ENCODE measurements at regions of chr19 and their contacts with region 1.

Region 1: GRCh38 chr19:38634757-38635482 is 12.5 kb upstream of the ACTN4 start:
- DNase-seq: peak; percentile 73
- ATAC-seq: peak; percentile 51
- H3K4me3 Mint-ChIP-seq: no peak overlapping the region
- H3K27ac Mint-ChIP-seq: peak overlapping the region; percentile 79
- H3K4me1 Mint-ChIP-seq: peaks cover 29% of the 10 kb centered on the region
- H3K27me3 Mint-ChIP-seq: no peaks in the 10 kb centered on the region
- CTCF ChIP-seq: peak; percentile 76

Region 2: DNA sequence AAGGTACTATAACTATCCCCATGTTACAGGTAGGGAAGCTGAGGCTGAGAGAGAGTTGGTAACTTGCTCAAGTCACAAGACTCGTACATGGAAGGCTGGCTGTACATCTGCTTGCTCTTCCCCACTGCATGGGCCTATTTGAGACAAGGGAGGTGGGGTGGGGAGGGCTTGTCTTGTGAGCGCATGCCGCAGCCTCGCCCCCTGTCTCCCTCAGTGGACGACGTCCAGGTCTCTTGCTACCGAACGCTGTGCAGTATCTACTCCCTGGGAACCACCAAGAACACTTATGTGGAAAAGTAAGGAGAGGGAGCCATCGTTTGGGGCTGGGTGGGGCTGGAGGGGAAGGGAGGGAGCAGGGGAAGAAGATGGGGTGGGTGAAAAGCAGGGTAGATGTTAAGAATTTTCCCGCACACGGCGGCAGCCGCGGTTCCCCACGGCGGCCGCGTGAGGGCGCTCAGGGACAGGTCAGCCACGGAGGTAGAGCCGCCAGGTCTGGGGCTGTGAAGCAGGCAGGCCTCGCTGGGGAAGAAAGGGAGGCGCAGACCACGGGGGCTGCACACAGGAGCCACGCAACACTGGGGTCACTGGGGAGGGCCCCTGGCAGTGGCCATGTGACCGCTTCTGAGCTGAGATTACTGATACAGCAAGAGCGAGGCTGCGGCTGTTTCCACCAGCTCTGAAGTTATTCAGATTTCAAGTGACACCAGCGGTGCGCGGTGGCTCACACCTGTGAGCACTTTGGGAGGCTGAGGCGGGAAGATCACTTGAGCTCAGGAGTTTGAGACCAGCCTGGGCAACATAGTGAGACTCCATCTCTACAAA is 119.9 kb before region 1 on chr19:
- CTCF ChIA-PET with region 1: interaction called, 8 read pairs
- POLR2A ChIA-PET with region 1: interaction called, 3 read pairs
- intact Hi-C with region 1: loop called (anchors 1 kb)
- DNase-seq: peak; percentile 70
- ATAC-seq: peak; percentile 97
- H3K4me3 Mint-ChIP-seq: no peak overlapping the region
- H3K27ac Mint-ChIP-seq: no peak overlapping the region
- H3K4me1 Mint-ChIP-seq: peaks cover 5% of the 10 kb centered on the region
- H3K27me3 Mint-ChIP-seq: peaks cover 12% of the 10 kb centered on the region
- CTCF ChIP-seq: no peak

Region 3: DNA sequence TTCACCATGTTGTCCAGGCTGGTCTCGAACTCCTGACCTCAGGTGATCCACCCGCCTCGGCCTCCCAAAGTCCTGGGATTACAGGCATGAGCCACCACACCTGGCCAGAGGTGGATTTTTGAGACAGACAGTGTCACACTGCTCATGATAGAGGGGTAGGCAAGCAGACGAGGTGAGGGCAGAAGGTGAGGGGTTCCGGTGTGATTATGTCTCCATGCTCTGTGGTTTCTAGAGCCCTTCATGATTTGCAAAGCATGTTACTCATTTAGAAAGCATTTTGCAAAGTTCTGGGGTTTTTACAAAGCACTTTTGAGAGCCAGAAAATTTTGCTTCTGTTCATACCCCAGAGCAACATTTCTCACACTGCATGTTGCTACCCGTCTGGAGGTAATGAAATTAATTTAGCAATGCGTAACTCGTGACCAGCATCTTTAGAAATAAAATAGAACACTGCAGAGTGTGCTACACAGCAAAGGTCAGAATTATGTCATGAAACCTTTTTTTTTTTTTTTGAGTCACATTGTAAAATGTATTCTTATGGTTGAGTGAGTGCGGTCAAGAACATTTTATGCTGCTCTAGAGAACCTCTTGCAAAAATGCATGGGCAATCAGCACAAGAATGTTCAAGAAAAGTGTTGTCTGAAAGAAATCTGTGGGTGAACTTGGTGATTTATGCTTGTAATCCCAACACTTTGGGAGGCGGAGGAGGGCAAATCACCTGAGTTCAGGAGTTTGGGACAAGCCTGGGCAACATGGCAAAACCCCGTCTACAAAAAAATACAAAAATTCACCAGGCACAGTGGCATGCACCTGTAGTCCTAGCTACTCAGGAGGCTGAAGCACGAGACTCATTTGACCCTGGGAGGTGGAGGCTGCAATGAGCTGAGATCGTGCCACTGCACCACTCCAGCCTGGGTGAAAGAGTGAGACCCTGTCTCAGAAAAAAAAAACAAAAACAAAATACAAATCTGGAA is 75.2 kb before region 1 on chr19:
- CTCF ChIA-PET with region 1: interaction called, 12 read pairs
- POLR2A ChIA-PET with region 1: interaction called, 4 read pairs
- intact Hi-C with region 1: loop called (anchors 1 kb)
- DNase-seq: no peak
- ATAC-seq: peak; percentile 82
- H3K4me3 Mint-ChIP-seq: peak overlapping the region; percentile 75
- H3K27ac Mint-ChIP-seq: peak overlapping the region; percentile 90
- H3K4me1 Mint-ChIP-seq: peaks cover 57% of the 10 kb centered on the region
- H3K27me3 Mint-ChIP-seq: peaks cover 6% of the 10 kb centered on the region
- CTCF ChIP-seq: no peak

Region 4: DNA sequence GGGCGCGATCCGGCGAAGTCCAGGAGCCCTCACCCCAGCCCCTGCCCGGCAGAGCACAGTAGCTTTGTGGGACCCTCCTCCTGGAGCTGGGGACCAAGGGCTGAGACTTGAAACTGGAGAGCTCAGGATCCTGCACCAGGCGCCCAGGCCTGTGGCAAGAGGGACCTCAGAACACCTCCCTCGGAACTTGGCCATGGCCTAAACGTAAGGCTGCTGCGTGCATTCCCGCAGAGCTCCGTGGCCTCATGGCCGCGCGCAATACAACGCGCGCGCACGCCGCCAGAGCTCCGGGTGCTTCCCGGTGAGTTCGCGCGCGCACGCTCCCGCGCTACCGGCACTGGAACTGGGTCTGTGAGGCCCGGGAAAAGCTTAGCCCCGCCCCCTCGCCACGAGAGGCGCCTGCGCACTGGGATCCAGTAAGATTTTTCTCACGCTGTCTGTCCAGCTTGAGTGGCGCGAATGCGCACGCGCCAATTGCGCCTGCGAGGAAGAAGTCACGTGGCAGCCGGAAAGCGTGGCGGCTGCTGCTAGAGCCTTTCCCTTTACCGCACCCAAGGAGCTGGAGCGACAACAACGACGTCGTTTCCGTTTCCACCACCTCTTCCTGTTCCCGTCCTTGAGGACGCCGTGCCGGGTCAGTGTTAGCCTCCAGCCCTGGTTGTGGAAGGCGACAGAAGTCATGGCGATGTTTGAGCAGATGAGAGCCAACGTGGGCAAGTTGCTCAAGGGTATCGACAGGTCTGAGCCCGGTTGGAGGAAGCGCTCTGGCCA is 16.1 kb before region 1 on chr19 and contains the start of gene EIF3K:
- CTCF ChIA-PET with region 1: interaction called, 49 read pairs
- POLR2A ChIA-PET with region 1: interaction called, 16 read pairs
- intact Hi-C with region 1: loop called (anchors 1 kb)
- DNase-seq: peak; percentile 97
- ATAC-seq: peak; percentile 28
- H3K4me3 Mint-ChIP-seq: peak within 1 kb of the TSS; percentile 100
- H3K27ac Mint-ChIP-seq: peak within 1 kb of the TSS; percentile 97
- H3K4me1 Mint-ChIP-seq: peaks cover 53% of the 10 kb centered on the region
- H3K27me3 Mint-ChIP-seq: no peaks in the 10 kb centered on the region
- CTCF ChIP-seq: no peak
- total RNA-seq, gene EIF3K: 344 and 385 TPM in 2 replicates

Region 5: DNA sequence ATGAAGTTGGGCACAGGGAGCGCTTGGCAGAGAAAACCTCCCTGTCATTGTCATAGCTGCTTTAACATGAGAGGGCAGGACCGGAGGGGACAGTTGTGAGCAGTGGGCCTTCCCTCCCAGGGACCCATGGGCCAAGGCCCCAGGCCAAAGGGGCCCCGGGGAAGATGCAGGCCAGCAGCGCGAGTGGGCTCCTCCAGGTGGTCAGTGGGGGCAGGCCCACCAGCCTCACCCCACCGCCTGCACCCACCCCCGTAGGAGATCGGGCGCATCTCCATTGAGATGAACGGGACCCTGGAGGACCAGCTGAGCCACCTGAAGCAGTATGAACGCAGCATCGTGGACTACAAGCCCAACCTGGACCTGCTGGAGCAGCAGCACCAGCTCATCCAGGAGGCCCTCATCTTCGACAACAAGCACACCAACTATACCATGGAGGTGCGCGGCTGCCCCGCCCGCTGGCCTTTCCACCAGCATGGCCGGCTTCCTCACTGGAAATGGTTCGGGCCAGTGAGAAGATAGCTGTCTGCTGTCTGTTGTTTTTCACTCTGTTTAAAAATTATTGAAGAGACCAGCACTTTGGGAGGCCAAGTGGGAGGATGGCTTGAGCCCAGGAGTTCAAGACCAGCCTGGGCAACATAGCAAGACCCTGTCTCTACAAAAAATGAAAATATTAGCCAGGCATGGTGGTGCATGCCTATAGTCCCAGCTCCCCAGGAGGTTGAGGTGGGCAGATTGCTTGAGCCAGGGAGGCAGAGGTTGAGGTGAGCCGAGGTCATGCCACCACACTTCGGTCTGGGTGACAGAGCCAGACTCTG is 90.8 kb after region 1 on chr19:
- CTCF ChIA-PET with region 1: no interaction called
- POLR2A ChIA-PET with region 1: no interaction called
- intact Hi-C with region 1: no loop called
- DNase-seq: no peak
- ATAC-seq: no peak
- H3K4me3 Mint-ChIP-seq: no peak overlapping the region
- H3K27ac Mint-ChIP-seq: no peak overlapping the region
- H3K4me1 Mint-ChIP-seq: peaks cover 5% of the 10 kb centered on the region
- H3K27me3 Mint-ChIP-seq: no peaks in the 10 kb centered on the region
- CTCF ChIP-seq: no peak

Region 6: DNA sequence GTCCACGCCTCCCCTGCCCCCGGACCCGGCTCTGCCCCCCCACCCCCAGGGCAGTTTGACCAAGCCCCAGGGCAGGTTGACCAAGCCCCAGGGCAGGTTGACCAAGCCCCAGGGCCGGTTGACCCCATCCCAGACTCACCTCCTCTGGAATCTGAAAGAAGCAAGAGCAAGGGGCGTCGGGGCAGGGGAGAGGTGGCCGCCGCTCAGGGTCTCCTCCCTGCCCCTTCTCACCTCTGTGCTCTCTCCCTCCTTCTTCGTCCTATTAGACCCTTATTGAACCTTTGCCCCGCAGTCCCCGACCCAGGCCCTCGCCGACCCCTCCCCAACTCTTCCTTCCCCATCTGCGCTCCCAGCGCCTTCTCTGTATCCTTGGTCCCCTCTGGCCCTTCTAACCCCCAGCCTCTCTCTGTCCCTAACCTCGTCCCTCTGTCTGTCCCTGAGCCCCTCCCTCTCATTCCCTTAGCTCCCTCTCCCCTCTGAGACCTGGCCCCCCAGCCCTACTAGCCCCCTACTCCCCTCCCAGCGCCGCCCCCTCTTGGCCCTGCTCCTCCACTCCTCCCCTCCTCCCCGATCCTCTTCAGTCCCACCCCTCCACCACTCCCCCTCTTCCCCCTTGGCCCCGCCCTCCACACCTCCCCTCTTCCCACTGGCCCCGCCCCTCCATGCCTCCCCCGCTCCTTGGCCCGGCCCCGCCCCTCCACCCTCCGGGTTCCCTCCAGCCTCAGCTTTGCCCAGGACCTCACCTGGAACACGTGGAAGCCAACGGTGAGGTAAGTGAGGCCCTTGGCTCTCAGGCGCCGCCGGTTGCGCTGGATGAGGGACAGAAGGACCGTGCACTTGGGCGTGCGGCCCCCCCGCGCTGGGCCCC is 101.7 kb after region 1 on chr19:
- CTCF ChIA-PET with region 1: no interaction called
- POLR2A ChIA-PET with region 1: interaction called, 4 read pairs
- intact Hi-C with region 1: loop called (anchors 2 kb)
- DNase-seq: peak; percentile 64
- ATAC-seq: peak; percentile 60
- H3K4me3 Mint-ChIP-seq: peak overlapping the region; percentile 71
- H3K27ac Mint-ChIP-seq: peak overlapping the region; percentile 12
- H3K4me1 Mint-ChIP-seq: peaks cover 38% of the 10 kb centered on the region
- H3K27me3 Mint-ChIP-seq: no peaks in the 10 kb centered on the region
- CTCF ChIP-seq: no peak